Activated naive CD8-positive, alpha-beta T cell treated with anti-CD3 and anti-CD28 coated beads, Interleukin-2, amount 10 ng/mL, durations not matched to agents 7 days and 5 days (primary cell): ENCODE measurements at regions of chr11 and their contacts with region 1.

Region 1: GRCh38 chr11:67409261-67409666 is 5.4 kb downstream of the TBC1D10C start:
- DNase-seq: peak; percentile 86
- ATAC-seq: peak; percentile 69
- H3K4me3 Mint-ChIP-seq: peak overlapping the region; percentile 98
- H3K27ac Mint-ChIP-seq: peak overlapping the region; percentile 95
- H3K4me1 Mint-ChIP-seq: peaks cover 67% of the 10 kb centered on the region
- H3K27me3 Mint-ChIP-seq: no peaks in the 10 kb centered on the region

Region 2: DNA sequence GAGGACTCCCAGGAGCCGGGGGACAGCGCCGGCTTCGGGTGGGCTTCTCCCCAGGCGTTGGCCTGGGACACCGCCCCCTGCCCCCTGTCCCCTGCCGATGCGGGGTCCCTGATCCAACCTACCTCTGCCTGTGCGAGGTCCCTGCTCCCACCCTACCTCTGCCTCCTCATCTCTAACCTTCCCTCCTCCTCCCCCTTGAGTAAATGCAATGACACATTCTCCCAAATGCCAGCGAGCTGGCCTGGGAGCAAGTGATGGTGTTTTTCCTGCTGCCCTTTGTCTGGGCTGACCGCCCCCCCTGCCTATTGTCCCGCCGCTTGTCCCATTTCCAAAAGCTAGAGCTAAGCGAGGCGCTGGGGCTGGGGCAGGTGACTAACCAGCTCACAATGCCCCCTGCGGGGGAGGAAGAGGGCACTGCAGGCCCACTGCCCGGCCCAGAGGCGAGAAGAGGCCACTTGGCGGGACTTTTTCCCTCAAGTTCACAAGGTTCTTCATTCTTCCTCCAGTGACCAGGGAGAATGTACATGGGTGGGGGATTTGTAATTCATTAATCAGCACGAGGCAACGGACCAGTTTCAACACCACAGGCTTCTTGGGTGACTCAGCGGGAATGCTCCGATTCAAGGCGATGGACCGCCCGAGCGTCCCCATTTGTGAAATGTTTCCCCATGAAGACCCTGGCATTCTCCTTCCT is 35.2 kb before region 1 on chr11:
- POLR2A ChIA-PET with region 1: no interaction called
- DNase-seq: no peak
- ATAC-seq: peak; percentile 41
- H3K4me3 Mint-ChIP-seq: peak overlapping the region; percentile 85
- H3K27ac Mint-ChIP-seq: peak overlapping the region; percentile 65
- H3K4me1 Mint-ChIP-seq: peaks cover 33% of the 10 kb centered on the region
- H3K27me3 Mint-ChIP-seq: peaks cover 58% of the 10 kb centered on the region

Region 3: GRCh38 chr11:67391304-67392132 is 17.7 kb before region 1 on chr11 and contains the start of gene RAD9A:
- POLR2A ChIA-PET with region 1: interaction called, 91 read pairs
- DNase-seq: peak; percentile 93
- ATAC-seq: peak; percentile 68
- H3K4me3 Mint-ChIP-seq: peak within 1 kb of the TSS; percentile 96
- H3K27ac Mint-ChIP-seq: peak within 1 kb of the TSS; percentile 75
- H3K4me1 Mint-ChIP-seq: peaks cover 36% of the 10 kb centered on the region
- H3K27me3 Mint-ChIP-seq: no peaks in the 10 kb centered on the region
- total RNA-seq, gene RAD9A: 65.3 to 67.1 TPM

Region 4: DNA sequence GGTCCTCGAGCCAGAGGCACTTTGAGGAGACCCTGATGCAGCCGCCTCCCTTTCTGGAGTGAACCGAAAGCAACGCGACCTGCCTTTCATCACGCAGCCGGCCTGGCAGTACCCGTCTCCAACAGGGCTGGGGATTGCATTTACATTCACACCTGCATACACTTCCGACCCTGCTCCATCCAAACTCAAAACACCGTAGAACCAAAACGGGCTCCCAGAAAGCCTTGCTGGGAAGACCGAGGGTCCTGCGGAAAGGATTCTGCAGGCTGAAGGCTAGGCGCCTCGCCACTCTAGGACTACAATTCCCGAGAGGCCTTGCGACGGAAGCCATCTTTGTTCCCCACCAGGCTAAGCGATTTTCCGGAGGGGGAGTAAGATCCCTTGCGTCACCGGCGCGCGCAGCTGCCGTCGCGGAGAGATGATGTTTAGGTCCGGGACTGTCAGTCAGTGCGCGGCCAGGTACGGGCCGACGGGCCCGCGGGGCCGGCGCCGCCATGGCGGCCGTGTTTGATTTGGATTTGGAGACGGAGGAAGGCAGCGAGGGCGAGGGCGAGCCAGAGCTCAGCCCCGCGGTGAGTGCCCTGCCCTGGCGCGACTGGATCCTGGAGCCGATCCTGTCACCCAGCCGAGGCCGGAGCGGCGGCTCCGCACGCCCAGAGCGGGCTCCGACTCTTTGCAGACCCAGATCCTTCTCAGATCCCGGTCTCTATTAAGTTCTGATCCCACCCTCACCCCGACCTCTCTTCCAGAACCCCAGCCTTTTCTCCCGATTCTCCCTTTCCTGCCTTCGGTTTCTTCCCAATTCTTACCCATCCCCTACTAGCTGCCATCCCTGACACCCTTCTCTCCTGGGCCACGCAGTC is 19.0 kb after region 1 on chr11 and contains the start of gene RPS6KB2:
- POLR2A ChIA-PET with region 1: interaction called, 491 read pairs
- DNase-seq: peak; percentile 99
- ATAC-seq: peak; percentile 91
- H3K4me3 Mint-ChIP-seq: peak within 1 kb of the TSS; percentile 97
- H3K27ac Mint-ChIP-seq: peak within 1 kb of the TSS; percentile 93
- H3K4me1 Mint-ChIP-seq: peaks cover 33% of the 10 kb centered on the region
- H3K27me3 Mint-ChIP-seq: no peaks in the 10 kb centered on the region
- total RNA-seq, gene RPS6KB2: 69.0 to 71.4 TPM

Region 5: DNA sequence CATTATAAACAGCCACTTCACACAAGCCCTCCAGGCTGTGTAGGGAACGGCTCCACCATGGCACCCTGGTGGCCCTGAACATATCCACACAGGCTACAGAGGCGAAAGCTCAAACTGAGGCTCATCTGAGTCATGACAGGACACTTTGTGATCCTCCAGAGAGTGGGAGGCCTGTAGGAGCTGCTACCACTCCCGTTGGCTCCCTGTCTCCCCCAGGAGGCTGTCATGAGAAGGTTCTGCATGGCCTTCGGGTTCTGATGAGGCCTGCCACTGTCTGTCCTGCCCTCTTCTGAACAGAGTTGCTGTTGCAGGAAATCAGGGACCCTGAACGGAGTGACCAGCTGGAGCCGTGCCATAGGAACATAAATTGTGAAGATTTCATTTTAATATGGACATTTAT is 289.0 kb after region 1 on chr11:
- POLR2A ChIA-PET with region 1: no interaction called
- DNase-seq: no peak
- ATAC-seq: peak; percentile 63
- H3K4me3 Mint-ChIP-seq: no peak overlapping the region
- H3K27ac Mint-ChIP-seq: no peak overlapping the region
- H3K4me1 Mint-ChIP-seq: no peaks in the 10 kb centered on the region
- H3K27me3 Mint-ChIP-seq: peaks cover 16% of the 10 kb centered on the region